Activated T-helper 1 cell treated with anti-CD3 and anti-CD28 coated beads, Interleukin-12 subunit alpha, Interleukin-12 subunit beta, Interleukin-2, Interleukin-4 antibody, amounts not matched to agents 30 ng/mL and 10 ng/mL and 1 ng/mL, durations not matched to agents 14 hours and 24 hours and 36 hours (primary cell): ENCODE measurements at regions of chr2 and their contacts with region 1.

Region 1: GRCh38 chr2:101736861-101737291 is 39.4 kb downstream of the MAP4K4 start:
- DNase-seq: no peak
- H3K4me3 Mint-ChIP-seq: no peak overlapping the region
- H3K27ac Mint-ChIP-seq: peak overlapping the region; percentile 37
- H3K4me1 Mint-ChIP-seq: peaks cover 69% of the 10 kb centered on the region
- H3K27me3 Mint-ChIP-seq: no peaks in the 10 kb centered on the region

Region 2: DNA sequence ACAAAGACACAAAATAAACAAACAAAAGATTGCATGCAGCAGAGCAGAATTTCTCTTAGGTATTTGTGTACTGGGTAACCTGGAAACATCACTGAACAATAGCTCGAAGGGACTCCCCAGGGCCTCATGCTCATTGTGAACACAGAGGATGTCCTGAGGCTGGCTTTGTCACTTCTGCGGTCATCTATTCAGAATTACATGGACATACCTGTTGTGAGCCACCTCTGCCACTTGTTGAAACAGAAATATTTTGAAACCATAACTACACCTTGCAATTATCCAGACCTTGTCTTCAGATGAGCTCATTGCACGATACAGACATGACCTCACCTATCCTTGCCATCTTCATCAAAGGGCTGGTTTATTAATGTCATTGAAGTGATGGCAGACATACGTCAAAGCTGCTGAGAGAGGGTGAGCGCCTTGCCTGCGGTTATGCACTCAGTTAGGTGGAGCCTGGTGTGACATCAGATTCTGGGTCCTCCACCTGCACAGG is 326.1 kb before region 1 on chr2:
- intact Hi-C with region 1: no loop called
- DNase-seq: no peak
- H3K4me3 Mint-ChIP-seq: no peak overlapping the region
- H3K27ac Mint-ChIP-seq: no peak overlapping the region
- H3K4me1 Mint-ChIP-seq: no peaks in the 10 kb centered on the region
- H3K27me3 Mint-ChIP-seq: peaks cover 6% of the 10 kb centered on the region

Region 3: DNA sequence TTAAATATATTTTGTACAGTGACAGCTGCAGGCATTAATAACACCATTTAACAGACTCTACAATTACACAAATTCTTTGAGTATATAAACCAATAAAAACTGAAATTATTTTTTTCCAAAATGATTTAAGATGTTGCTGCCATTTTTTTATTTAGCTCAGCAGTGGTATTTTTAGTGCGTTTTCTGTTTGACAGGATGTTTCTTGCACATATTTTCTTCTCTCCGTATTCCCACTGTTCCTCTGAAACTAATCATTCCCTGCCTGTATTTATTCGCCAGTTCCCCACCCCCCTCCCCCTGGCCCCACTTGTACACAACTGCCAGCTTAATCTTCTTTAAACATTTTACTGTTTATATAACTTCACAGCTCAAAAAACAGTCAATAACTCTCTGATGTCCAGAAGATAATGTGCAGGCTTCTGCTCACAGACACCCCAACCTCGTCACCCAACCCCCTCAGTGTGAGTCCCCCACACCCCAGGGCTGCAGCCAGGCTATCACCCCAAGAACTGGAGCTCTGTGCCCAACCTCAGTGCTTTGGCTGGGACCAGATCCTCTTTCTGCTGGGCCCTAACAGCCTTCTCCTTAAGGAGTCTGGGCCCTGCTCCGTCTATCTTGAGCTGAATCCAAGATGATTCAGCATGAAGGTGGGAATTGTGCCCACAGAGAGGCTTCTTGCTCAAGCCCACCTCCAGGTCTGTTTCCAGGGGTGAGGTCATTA is 81.0 kb before region 1 on chr2:
- intact Hi-C with region 1: loop called (anchors 2 kb)
- DNase-seq: no peak
- H3K4me3 Mint-ChIP-seq: no peak overlapping the region
- H3K27ac Mint-ChIP-seq: no peak overlapping the region
- H3K4me1 Mint-ChIP-seq: peaks cover 18% of the 10 kb centered on the region
- H3K27me3 Mint-ChIP-seq: no peaks in the 10 kb centered on the region

Region 4: DNA sequence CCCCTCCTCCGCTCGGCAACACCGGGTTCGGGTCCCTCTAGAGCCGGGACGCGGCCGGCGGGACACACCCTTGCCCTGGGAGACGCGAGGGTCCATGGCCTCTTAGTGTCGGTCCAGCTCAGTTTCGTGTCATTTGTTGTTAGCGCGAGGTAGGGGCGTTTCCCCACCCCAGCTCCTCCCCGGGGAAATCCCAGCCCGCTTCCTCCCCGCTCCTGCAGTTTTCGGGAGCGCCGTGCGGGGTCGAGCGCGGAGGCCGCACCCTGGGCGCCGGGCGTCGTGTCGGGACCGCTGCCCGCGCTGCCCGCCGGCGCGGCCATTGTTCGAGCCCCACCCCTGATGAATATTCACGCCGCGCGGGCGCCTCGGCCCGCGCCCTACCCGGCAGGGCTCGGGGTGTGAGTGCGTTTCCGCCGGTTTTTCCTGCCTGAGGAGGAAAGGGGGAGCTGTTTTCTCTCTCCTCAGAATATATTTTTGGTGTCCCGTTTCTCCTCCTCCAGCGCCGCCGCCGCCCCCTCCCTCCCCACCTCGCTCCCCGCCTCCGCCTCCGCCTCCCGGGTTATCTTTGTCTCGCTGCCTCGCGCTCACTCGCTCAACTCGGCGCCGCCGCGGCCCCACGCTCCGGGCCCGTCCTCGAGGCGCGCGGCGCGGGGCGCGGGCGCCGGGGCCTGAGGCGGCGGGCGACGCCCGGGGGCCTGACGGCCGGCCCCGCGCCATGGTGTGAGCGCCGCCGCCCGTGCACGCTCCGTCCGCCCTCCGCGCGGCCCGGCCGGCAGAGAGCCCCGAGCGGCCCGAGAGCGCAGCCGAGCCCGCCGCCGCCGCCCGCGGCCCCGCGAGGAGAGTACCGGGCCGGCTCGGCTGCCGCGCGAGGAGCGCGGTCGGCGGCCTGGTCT is 39.5 kb before region 1 on chr2 and contains the start of gene MAP4K4:
- intact Hi-C with region 1: loop called (anchors 5 kb)
- DNase-seq: peak; percentile 69
- H3K4me3 Mint-ChIP-seq: peak within 1 kb of the TSS; percentile 88
- H3K27ac Mint-ChIP-seq: peak within 1 kb of the TSS; percentile 88
- H3K4me1 Mint-ChIP-seq: peaks cover 24% of the 10 kb centered on the region
- H3K27me3 Mint-ChIP-seq: no peaks in the 10 kb centered on the region
- total RNA-seq, gene MAP4K4: 54.3 and 54.5 TPM in 2 replicates

Region 5: DNA sequence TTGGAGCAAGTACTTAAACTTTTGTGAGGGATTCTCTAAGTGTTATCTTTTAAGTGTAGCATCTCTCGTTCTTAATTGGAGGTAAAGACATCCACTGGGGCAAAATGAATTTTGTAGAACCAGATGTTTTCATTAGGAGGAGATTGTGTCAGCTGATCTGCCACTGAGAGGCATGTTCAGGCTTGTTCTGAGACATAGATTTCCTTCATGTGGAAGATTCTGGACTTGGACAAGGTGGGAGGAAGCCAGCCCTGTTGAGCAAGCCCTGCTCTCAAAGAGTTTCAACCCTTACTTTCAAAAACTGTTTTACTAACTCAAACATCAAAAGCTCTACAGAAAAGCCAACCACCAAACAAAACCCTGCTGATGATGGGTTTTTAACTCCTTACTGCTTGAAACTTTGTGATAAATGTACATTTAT is 32.8 kb before region 1 on chr2:
- intact Hi-C with region 1: loop called (anchors 1 kb)
- DNase-seq: no peak
- H3K4me3 Mint-ChIP-seq: peak overlapping the region; percentile 78
- H3K27ac Mint-ChIP-seq: peak overlapping the region; percentile 82
- H3K4me1 Mint-ChIP-seq: peaks cover 64% of the 10 kb centered on the region
- H3K27me3 Mint-ChIP-seq: no peaks in the 10 kb centered on the region

Region 6: GRCh38 chr2:101751875-101752619 is 15.2 kb after region 1 on chr2:
- intact Hi-C with region 1: loop called (anchors 1 kb)
- DNase-seq: no peak
- H3K4me3 Mint-ChIP-seq: no peak overlapping the region
- H3K27ac Mint-ChIP-seq: no peak overlapping the region
- H3K4me1 Mint-ChIP-seq: peaks cover 61% of the 10 kb centered on the region
- H3K27me3 Mint-ChIP-seq: no peaks in the 10 kb centered on the region

Region 7: GRCh38 chr2:101759162-101759561 is 22.3 kb after region 1 on chr2:
- intact Hi-C with region 1: loop called (anchors 1 kb)
- DNase-seq: no peak
- H3K4me3 Mint-ChIP-seq: no peak overlapping the region
- H3K27ac Mint-ChIP-seq: no peak overlapping the region
- H3K4me1 Mint-ChIP-seq: peaks cover 69% of the 10 kb centered on the region
- H3K27me3 Mint-ChIP-seq: no peaks in the 10 kb centered on the region

Region 8: GRCh38 chr2:101781791-101782426 is 45.0 kb after region 1 on chr2:
- intact Hi-C with region 1: loop called (anchors 2 kb)
- DNase-seq: no peak
- H3K4me3 Mint-ChIP-seq: peak overlapping the region; percentile 4
- H3K27ac Mint-ChIP-seq: peak overlapping the region; percentile 13
- H3K4me1 Mint-ChIP-seq: peaks cover 58% of the 10 kb centered on the region
- H3K27me3 Mint-ChIP-seq: no peaks in the 10 kb centered on the region